ENCODE measurements at regions of chr1 and their contacts with region 1.

Region 1: GRCh38 chr1:91120421-91120820 is 98.6 kb upstream of the ZNF644 start:
- DNase-seq: no peak
- H3K4me3 ChIP-seq: no peak overlapping the region
- H3K27ac ChIP-seq: no peak overlapping the region
- H3K4me1 ChIP-seq: peaks cover 0 to 18% (median 14%) of the 10 kb centered on the region in 4 donors
- H3K27me3 ChIP-seq: no peaks in the 10 kb centered on the region
- CTCF ChIP-seq: no peak
- EP300 ChIP-seq: no peak
- POLR2A ChIP-seq: no peak

Region 2: GRCh38 chr1:91053630-91054029 is 66.8 kb before region 1 on chr1:
- intact Hi-C with region 1: loop called (anchors 2 kb)
- DNase-seq: peak; percentile 75
- H3K4me3 ChIP-seq: no peak overlapping the region
- H3K27ac ChIP-seq: no peak overlapping the region
- H3K4me1 ChIP-seq: no peaks in the 10 kb centered on the region
- H3K27me3 ChIP-seq: no peaks in the 10 kb centered on the region
- CTCF ChIP-seq: no peak
- EP300 ChIP-seq: no peak
- POLR2A ChIP-seq: no peak

Region 3: DNA sequence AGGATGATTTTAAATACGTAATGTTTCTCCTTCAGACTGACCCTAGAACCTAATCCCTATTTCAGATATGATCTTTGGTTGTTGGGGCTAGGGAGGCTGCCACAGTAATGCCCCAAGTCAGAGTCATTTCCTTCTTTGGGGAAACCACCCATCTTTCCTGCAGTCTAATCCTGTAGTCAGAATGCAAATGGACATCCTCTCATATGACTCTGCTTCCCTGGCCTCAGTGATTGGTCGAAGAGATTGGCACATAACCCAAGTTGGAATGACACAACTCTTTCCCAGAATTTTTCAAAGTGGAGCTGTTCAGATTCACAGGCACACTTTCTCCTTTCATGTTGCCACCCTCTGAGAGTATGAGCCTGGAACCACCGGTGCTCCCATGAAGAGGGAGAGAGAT is 39.8 kb before region 1 on chr1:
- intact Hi-C with region 1: no loop called
- DNase-seq: peak; percentile 55
- H3K4me3 ChIP-seq: no peak overlapping the region
- H3K27ac ChIP-seq: no peak overlapping the region
- H3K4me1 ChIP-seq: no peaks in the 10 kb centered on the region
- H3K27me3 ChIP-seq: no peaks in the 10 kb centered on the region
- CTCF ChIP-seq: no peak
- EP300 ChIP-seq: no peak
- POLR2A ChIP-seq: no peak